Naive thymus-derived CD4-positive, alpha-beta T cell (primary cell): ENCODE measurements at regions of chr5 and their contacts with region 1.

Region 1: DNA sequence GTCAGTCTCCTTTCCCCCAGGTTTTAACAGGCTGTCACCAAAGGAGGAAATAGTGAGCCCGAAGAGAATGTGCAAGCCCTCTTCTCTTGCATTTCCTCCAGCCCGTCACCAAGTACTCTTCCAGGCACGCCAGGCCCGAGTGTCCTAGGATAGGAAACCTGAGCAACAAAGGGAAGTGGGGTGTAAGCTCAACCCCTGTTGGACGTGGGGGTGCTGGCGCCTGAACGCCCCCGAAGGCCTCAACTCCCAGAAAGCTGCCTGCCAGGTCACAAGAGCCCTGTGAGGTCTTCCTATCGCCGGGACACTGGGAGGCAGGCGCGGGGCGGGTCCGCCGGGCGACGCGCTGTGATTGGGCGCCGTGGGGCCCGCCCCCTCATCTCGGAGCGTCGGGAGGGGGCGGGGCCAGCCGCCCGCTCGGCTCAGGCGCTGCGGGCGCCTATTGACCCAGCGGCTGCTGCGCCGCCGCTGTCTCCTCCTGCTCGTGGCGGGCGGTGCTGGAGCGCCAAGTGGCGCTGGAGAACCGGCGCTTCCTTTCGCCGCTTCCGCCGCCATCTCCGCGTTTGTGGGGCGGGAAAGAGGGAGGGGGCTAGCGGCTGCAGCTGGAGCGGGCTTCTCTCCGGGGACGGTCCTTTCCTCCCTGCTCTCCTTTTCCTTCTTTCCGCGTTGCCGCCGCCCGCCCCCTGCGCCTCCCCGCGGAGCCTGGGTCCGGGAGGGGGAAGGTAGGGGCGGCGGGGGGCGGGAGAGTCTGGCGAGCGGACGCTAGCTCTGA is 572 bp upstream of the MAN2A1 start:
- DNase-seq: peak; percentile 69 to 84 (median 78)
- ATAC-seq: peak; percentile 88
- H3K4me3 ChIP-seq: peak overlapping the region; percentile 94
- H3K4me3 Mint-ChIP-seq: peak overlapping the region; percentile 83 to 96 (median 92)
- H3K27ac ChIP-seq: peak overlapping the region; percentile 93
- H3K27ac Mint-ChIP-seq: peak overlapping the region; percentile 45 to 94 (median 90)
- H3K4me1 ChIP-seq: peaks cover 9 to 13% of the 10 kb centered on the region in 2 donors
- H3K4me1 Mint-ChIP-seq: peaks cover 14 to 36% (median 33%) of the 10 kb centered on the region in 7 donors
- H3K27me3 ChIP-seq: no peaks in the 10 kb centered on the region
- H3K27me3 Mint-ChIP-seq: peaks cover 0 to 3% (median 0%) of the 10 kb centered on the region in 5 donors

Region 2: GRCh38 chr5:108748401-108749127 is 940.6 kb before region 1 on chr5:
- CTCF ChIA-PET with region 1: no interaction called
- POLR2A ChIA-PET with region 1: no interaction called
- intact Hi-C with region 1: loop called (anchors 1 kb)
- DNase-seq: peak; percentile 92 to 99 (median 98)
- ATAC-seq: peak; percentile 94
- H3K4me3 ChIP-seq: peak overlapping the region; percentile 91
- H3K4me3 Mint-ChIP-seq: peak overlapping the region; percentile 83 to 100 (median 93)
- H3K27ac ChIP-seq: peak overlapping the region; percentile 94
- H3K27ac Mint-ChIP-seq: peak overlapping the region; percentile 78 to 98 (median 93)
- H3K4me1 ChIP-seq: peaks cover 10 to 12% of the 10 kb centered on the region in 2 donors
- H3K4me1 Mint-ChIP-seq: peaks cover 9 to 26% (median 13%) of the 10 kb centered on the region in 7 donors
- H3K27me3 ChIP-seq: no peaks in the 10 kb centered on the region
- H3K27me3 Mint-ChIP-seq: peaks cover 0 to 52% (median 0%) of the 10 kb centered on the region in 5 donors

Region 3: GRCh38 chr5:109468737-109469420 is 220.3 kb before region 1 on chr5:
- CTCF ChIA-PET with region 1: no interaction called
- POLR2A ChIA-PET with region 1: no interaction called
- intact Hi-C with region 1: no loop called
- DNase-seq: peak; percentile 19 to 50 (median 36)
- ATAC-seq: peak; percentile 93
- H3K4me3 ChIP-seq: no peak overlapping the region
- H3K4me3 Mint-ChIP-seq: peak overlapping the region in 1 of 10 donors; percentile 20
- H3K27ac ChIP-seq: no peak overlapping the region
- H3K27ac Mint-ChIP-seq: no peak overlapping the region
- H3K4me1 ChIP-seq: peaks cover 0 to 3% of the 10 kb centered on the region in 2 donors
- H3K4me1 Mint-ChIP-seq: peaks cover 0 to 13% (median 4%) of the 10 kb centered on the region in 7 donors
- H3K27me3 ChIP-seq: no peaks in the 10 kb centered on the region
- H3K27me3 Mint-ChIP-seq: peaks cover 6 to 17% (median 15%) of the 10 kb centered on the region in 5 donors

Region 4: DNA sequence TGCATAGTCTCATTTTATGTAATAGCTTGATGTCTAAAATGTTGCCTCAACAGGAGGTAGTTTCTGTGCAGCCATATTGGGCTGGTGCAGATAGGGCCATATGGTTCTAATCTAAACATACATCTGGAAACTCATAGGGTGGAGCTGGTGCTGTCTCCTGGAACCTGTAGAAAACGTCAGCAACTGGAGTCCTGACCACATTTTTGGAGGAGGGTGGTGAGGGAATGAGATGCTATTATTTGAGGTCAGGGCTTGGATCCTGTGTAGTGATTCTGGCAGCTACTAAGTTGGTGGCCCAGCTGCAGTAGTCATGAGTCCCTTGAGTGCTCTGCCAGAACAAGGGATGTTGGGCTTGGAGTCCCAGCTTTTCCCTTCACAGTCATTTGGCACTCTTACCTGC is 14.7 kb after region 1 on chr5:
- CTCF ChIA-PET with region 1: interaction called, 5 read pairs
- POLR2A ChIA-PET with region 1: interaction called, 4 read pairs
- intact Hi-C with region 1: loop called in 1 of 2 experiments (anchors 1 kb)
- DNase-seq: no peak
- ATAC-seq: no peak
- H3K4me3 ChIP-seq: no peak overlapping the region
- H3K4me3 Mint-ChIP-seq: peak overlapping the region in 3 of 10 donors; percentile 2 to 34 (median 13)
- H3K27ac ChIP-seq: no peak overlapping the region
- H3K27ac Mint-ChIP-seq: no peak overlapping the region
- H3K4me1 ChIP-seq: peaks cover 17 to 44% of the 10 kb centered on the region in 2 donors
- H3K4me1 Mint-ChIP-seq: peaks cover 31 to 98% (median 95%) of the 10 kb centered on the region in 7 donors
- H3K27me3 ChIP-seq: no peaks in the 10 kb centered on the region
- H3K27me3 Mint-ChIP-seq: no peaks in the 10 kb centered on the region

Region 5: DNA sequence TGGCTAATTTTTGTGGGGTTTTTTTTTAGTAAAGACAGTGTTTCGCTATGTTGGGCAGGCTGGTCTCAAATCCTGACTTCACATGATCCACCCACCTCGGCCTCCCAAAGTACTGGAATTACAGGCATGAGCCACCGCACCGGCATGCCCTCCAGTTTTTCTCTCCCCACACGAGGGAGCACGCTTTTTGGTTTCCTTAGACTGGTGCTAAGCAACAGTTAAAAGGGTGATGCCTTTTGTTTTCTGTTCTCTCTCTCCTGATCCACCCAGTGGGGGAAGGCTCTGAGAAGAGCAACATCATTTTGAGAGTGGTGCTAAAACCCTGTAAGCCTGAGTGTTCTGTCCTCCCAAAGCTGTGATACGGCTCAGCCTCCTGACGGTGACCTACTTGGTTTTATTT is 147.1 kb after region 1 on chr5:
- CTCF ChIA-PET with region 1: no interaction called
- POLR2A ChIA-PET with region 1: no interaction called
- intact Hi-C with region 1: no loop called
- DNase-seq: no peak
- ATAC-seq: no peak
- H3K4me3 ChIP-seq: no peak overlapping the region
- H3K4me3 Mint-ChIP-seq: no peak overlapping the region
- H3K27ac ChIP-seq: no peak overlapping the region
- H3K27ac Mint-ChIP-seq: no peak overlapping the region
- H3K4me1 ChIP-seq: no peaks in the 10 kb centered on the region
- H3K4me1 Mint-ChIP-seq: peaks cover 2 to 46% (median 18%) of the 10 kb centered on the region in 7 donors
- H3K27me3 ChIP-seq: no peaks in the 10 kb centered on the region
- H3K27me3 Mint-ChIP-seq: no peaks in the 10 kb centered on the region

Region 6: DNA sequence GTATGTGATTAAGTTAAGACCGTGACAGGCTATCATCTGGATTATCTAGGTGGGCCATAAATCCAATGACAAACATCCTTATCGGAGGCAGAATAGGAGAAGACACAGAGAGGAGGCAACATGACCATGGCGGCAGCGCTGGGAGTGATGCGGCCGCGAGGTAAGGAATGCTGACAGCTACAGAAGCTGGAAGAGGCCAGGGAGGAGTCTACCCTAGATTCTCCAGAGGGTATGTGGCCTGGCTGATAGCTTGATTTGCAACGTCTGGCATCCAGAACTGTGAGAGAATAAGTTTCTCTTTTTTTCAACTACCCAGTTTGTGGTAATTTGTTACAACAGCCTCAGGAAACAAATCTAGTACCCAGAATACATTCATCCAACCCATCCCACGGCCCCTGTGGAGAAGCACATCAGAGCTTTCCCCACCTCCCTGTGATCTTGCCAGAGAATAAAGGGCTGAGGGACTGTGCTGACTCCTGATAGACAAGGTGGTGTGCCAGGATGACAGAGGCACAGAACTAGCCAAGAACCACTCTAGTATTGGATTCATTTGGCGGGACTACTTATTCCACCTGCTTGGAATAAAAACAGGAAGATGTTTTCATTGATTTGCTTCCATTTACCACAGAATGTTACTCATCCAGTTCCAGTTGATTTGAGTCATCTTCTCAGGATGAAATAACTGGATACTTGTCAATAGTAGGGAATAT is 187.9 kb after region 1 on chr5:
- CTCF ChIA-PET with region 1: no interaction called
- POLR2A ChIA-PET with region 1: no interaction called
- intact Hi-C with region 1: loop called in 1 of 2 experiments (anchors 5 kb)
- DNase-seq: no peak
- ATAC-seq: no peak
- H3K4me3 ChIP-seq: no peak overlapping the region
- H3K4me3 Mint-ChIP-seq: peak overlapping the region in 1 of 10 donors; percentile 75
- H3K27ac ChIP-seq: no peak overlapping the region
- H3K27ac Mint-ChIP-seq: peak overlapping the region in 2 of 9 donors; percentile 42 to 76
- H3K4me1 ChIP-seq: peaks cover 0 to 17% of the 10 kb centered on the region in 2 donors
- H3K4me1 Mint-ChIP-seq: peaks cover 17 to 61% (median 45%) of the 10 kb centered on the region in 7 donors
- H3K27me3 ChIP-seq: no peaks in the 10 kb centered on the region
- H3K27me3 Mint-ChIP-seq: no peaks in the 10 kb centered on the region

Region 7: GRCh38 chr5:110333384-110333783 is 644.2 kb after region 1 on chr5:
- CTCF ChIA-PET with region 1: interaction called, 3 read pairs
- POLR2A ChIA-PET with region 1: no interaction called
- intact Hi-C with region 1: loop called in 1 of 2 experiments (anchors 1 kb)
- DNase-seq: no peak
- ATAC-seq: no peak
- H3K4me3 ChIP-seq: no peak overlapping the region
- H3K4me3 Mint-ChIP-seq: no peak overlapping the region
- H3K27ac ChIP-seq: no peak overlapping the region
- H3K27ac Mint-ChIP-seq: no peak overlapping the region
- H3K4me1 ChIP-seq: no peaks in the 10 kb centered on the region
- H3K4me1 Mint-ChIP-seq: no peaks in the 10 kb centered on the region
- H3K27me3 ChIP-seq: no peaks in the 10 kb centered on the region
- H3K27me3 Mint-ChIP-seq: peaks cover 0 to 17% (median 0%) of the 10 kb centered on the region in 5 donors

Region 8: GRCh38 chr5:110625376-110625999 is 936.3 kb after region 1 on chr5:
- CTCF ChIA-PET with region 1: interaction called, 7 read pairs
- POLR2A ChIA-PET with region 1: interaction called, 4 read pairs
- intact Hi-C with region 1: loop called (anchors 1 to 5 kb)
- DNase-seq: peak in 4 of 9 donors; percentile 18 to 41 (median 36)
- ATAC-seq: no peak
- H3K4me3 ChIP-seq: no peak overlapping the region
- H3K4me3 Mint-ChIP-seq: no peak overlapping the region
- H3K27ac ChIP-seq: no peak overlapping the region
- H3K27ac Mint-ChIP-seq: no peak overlapping the region
- H3K4me1 ChIP-seq: no peaks in the 10 kb centered on the region
- H3K4me1 Mint-ChIP-seq: no peaks in the 10 kb centered on the region
- H3K27me3 ChIP-seq: no peaks in the 10 kb centered on the region
- H3K27me3 Mint-ChIP-seq: peaks cover 0 to 11% (median 8%) of the 10 kb centered on the region in 5 donors

Region 9: DNA sequence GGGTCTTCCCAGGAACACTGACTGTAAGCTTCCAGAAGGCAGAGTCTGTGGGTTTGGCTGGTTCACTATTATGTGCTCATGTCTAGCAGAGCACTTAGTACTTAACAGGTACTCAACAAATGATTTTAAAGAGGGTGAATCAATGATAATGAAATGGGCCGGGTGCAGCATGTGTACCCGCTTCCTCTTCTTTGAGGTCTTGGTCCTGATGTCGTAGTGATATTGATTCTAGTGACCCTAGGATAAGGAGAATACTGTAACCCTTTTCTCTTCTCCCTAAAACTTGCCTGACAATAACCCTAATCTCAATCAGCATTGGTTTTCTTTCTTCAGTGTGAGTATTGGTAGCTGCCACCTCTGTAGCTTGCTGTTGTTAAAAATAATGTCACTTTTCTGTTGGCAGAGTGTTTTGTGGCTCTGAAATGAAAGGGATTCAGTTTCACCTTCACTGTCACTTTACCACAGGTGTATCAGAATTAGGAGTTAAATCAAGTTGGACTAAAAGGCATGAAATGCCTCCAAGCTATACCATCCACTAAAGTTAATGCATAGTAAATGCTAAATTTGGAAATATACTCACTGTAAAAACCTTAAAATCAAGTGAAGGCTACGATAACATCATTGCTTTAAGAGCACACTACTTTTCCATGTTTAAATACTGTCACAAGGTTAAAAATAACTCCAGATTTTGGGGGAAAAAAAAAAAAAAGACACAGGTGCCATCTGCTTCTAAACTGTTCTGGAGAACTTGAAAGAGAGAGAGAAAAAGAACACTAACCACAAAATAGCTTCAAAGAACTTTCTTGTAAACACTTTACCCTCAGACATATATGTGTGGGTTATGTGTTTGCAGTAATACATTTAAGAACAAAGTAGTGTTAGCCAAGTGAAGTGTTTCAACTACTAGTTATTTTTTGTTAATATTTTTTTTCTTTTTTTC is 1541.0 kb after region 1 on chr5:
- CTCF ChIA-PET with region 1: no interaction called
- POLR2A ChIA-PET with region 1: no interaction called
- intact Hi-C with region 1: loop called (anchors 5 to 10 kb)
- DNase-seq: peak in 7 of 9 donors; percentile 52 to 86 (median 79)
- ATAC-seq: peak; percentile 73
- H3K4me3 ChIP-seq: peak overlapping the region; percentile 37
- H3K4me3 Mint-ChIP-seq: peak overlapping the region; percentile 79 to 98 (median 90)
- H3K27ac ChIP-seq: peak overlapping the region; percentile 93
- H3K27ac Mint-ChIP-seq: peak overlapping the region; percentile 93 to 100 (median 98)
- H3K4me1 ChIP-seq: peaks cover 64 to 83% of the 10 kb centered on the region in 2 donors
- H3K4me1 Mint-ChIP-seq: peaks cover 38 to 78% (median 73%) of the 10 kb centered on the region in 7 donors
- H3K27me3 ChIP-seq: no peaks in the 10 kb centered on the region
- H3K27me3 Mint-ChIP-seq: no peaks in the 10 kb centered on the region